SK-N-SH (cell line): ENCODE measurements at regions of chr12 and their contacts with region 1.

Region 1: GRCh38 chr12:53098982-53099651 is 1.6 kb downstream of the IGFBP6 start:
- DNase-seq: peak; percentile 90
- H3K4me3 ChIP-seq: peak overlapping the region; percentile 62 to 78; a peak in 3 of 4 replicates
- H3K27ac ChIP-seq: peak overlapping the region; percentile 90 to 98
- H3K4me1 ChIP-seq: peaks cover 10 to 21% of the 10 kb centered on the region in 2 experiments; a peak in 2 of 4 replicates
- H3K27me3 ChIP-seq: no peaks in the 10 kb centered on the region
- CTCF ChIP-seq: peak; percentile 90
- EP300 ChIP-seq: peak; percentile 30 to 66; a peak in 2 of 4 replicates
- RAD21 ChIP-seq: peak; percentile 86

Region 2: GRCh38 chr12:52442600-52443061 is 656.5 kb before region 1 on chr12:
- CTCF ChIA-PET with region 1: no interaction called
- POLR2A ChIA-PET with region 1: no interaction called
- DNase-seq: no peak
- H3K4me3 ChIP-seq: no peak overlapping the region
- H3K27ac ChIP-seq: peak overlapping the region in 1 of 2 experiments; percentile 72; a peak in 2 of 4 replicates
- H3K4me1 ChIP-seq: peaks cover 0 to 13% of the 10 kb centered on the region in 2 experiments; a peak in 2 of 4 replicates
- H3K27me3 ChIP-seq: peaks cover 17% of the 10 kb centered on the region; the same call in 1 of the 2 replicates
- CTCF ChIP-seq: peak; percentile 21
- EP300 ChIP-seq: no peak
- RAD21 ChIP-seq: no peak

Region 3: DNA sequence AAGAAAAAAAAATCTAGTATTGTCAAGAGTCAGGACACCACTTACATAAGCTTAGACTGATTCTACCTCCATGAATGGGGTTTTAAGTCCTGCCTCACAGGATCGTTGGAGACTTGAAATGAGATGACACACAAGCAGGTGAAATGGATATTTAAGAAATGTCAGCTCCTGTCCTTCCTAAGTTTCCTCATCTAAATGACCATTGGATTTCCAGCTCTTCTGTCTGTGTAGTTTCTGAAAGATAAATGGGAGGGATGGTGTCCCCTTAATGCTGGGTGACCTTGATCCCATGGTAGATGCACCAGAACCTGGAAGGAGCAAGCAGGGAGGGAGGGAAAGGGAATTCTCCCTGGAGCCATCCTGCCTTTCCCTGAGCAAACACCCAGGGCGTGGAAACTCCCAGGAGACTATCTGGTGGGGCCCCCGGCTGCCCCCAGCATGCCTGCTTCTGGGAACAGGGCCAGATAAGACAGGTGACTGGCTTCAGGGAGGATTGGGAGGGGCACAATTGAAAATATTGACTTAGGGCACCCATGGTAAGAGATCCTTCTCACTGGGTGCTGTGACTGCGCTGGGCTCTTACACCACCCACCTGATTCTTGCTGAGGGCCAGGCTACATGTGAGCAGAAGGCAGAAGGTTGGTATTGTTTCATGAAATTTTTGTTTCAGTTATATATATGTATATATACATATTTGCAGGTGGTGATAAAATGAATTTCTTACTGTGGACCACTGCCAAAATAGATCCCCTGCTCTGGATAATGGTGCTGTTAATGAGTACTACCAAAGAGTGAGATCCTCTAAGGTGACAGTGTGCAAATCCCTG is 203.8 kb before region 1 on chr12:
- CTCF ChIA-PET with region 1: no interaction called
- POLR2A ChIA-PET with region 1: no interaction called
- DNase-seq: no peak
- H3K4me3 ChIP-seq: no peak overlapping the region
- H3K27ac ChIP-seq: no peak overlapping the region
- H3K4me1 ChIP-seq: peaks cover 0 to 5% of the 10 kb centered on the region in 2 experiments; a peak in 1 of 4 replicates
- H3K27me3 ChIP-seq: no peaks in the 10 kb centered on the region
- CTCF ChIP-seq: no peak
- EP300 ChIP-seq: no peak
- RAD21 ChIP-seq: no peak

Region 4: GRCh38 chr12:52992699-52993557 is 106.2 kb before region 1 on chr12:
- CTCF ChIA-PET with region 1: no interaction called
- POLR2A ChIA-PET with region 1: no interaction called
- DNase-seq: no peak
- H3K4me3 ChIP-seq: no peak overlapping the region
- H3K27ac ChIP-seq: no peak overlapping the region
- H3K4me1 ChIP-seq: no peaks in the 10 kb centered on the region
- H3K27me3 ChIP-seq: no peaks in the 10 kb centered on the region
- CTCF ChIP-seq: no peak
- EP300 ChIP-seq: no peak
- RAD21 ChIP-seq: no peak

Region 5: GRCh38 chr12:53047221-53048042 is 51.7 kb before region 1 on chr12:
- CTCF ChIA-PET with region 1: interaction called, 27 read pairs
- POLR2A ChIA-PET with region 1: no interaction called
- DNase-seq: peak; percentile 95
- H3K4me3 ChIP-seq: peak overlapping the region; percentile 73 to 75
- H3K27ac ChIP-seq: peak overlapping the region; percentile 95 to 98
- H3K4me1 ChIP-seq: peaks cover 29 to 63% of the 10 kb centered on the region in 2 experiments
- H3K27me3 ChIP-seq: no peaks in the 10 kb centered on the region
- CTCF ChIP-seq: no peak
- EP300 ChIP-seq: peak in 1 of 2 experiments; percentile 53; a peak in 1 of 4 replicates
- RAD21 ChIP-seq: no peak

Region 6: GRCh38 chr12:53054112-53054833 is 44.8 kb before region 1 on chr12:
- CTCF ChIA-PET with region 1: interaction called, 385 read pairs
- POLR2A ChIA-PET with region 1: interaction called, 3 read pairs
- DNase-seq: peak; percentile 97
- H3K4me3 ChIP-seq: peak overlapping the region; percentile 66
- H3K27ac ChIP-seq: peak overlapping the region; percentile 35 to 78; a peak in 3 of 4 replicates
- H3K4me1 ChIP-seq: peaks cover 25 to 46% of the 10 kb centered on the region in 2 experiments
- H3K27me3 ChIP-seq: no peaks in the 10 kb centered on the region
- CTCF ChIP-seq: no peak
- EP300 ChIP-seq: no peak
- RAD21 ChIP-seq: no peak

Region 7: DNA sequence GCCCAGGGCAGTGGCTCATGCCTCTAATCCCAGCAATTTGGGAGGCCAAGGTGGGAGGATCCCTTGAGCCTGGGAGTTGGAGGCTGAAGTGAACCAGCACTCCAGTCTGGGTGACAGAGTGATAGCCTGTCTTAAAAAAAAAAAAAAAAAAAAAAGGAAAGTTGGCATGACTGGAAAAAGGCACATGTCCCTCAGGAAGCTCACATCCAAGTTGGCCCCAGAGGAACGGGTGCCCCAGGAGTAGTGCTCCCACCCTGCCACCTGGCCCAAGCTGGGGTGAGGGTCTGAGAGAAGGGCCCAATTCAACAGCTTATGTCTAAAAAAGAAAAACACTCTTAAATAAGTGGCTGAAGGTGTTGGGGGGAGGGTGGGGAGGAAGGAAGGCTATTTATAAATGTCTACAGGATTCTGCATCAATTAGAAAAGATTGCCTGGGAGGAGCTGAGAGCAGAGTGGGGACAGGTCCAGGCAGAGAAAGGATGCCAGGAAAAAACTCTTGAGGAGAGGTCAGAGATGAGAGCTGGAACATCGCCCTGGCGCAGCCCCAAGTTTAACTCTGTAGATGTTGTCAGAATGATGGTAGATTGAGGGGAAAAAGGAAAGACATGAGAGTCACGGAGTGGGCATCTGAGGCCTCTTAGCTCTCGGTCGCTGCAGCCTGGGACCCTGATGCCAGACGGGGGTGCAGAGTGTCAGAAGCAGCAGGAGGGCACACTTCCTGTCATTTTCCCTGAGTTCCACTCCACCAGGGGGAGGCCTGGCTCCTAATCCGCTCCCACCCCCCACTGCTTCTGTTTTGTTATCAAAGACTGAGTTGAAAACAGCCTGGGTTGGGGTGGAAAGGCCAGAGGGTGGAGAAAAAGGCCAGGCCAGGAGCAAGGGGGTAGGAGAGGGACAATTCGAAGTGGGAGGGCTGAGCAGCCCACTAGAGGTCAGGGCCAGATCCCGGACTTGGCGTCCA is 27.2 kb before region 1 on chr12:
- CTCF ChIA-PET with region 1: interaction called, 385 read pairs
- POLR2A ChIA-PET with region 1: interaction called, 3 read pairs
- DNase-seq: peak; percentile 82
- H3K4me3 ChIP-seq: no peak overlapping the region
- H3K27ac ChIP-seq: peak overlapping the region; percentile 52 to 90
- H3K4me1 ChIP-seq: peaks cover 26 to 30% of the 10 kb centered on the region in 2 experiments
- H3K27me3 ChIP-seq: no peaks in the 10 kb centered on the region
- CTCF ChIP-seq: peak; percentile 45
- EP300 ChIP-seq: no peak
- RAD21 ChIP-seq: peak; percentile 35

Region 8: GRCh38 chr12:53079226-53080117 is 19.6 kb before region 1 on chr12 and contains the start of gene SPRYD3:
- CTCF ChIA-PET with region 1: interaction called, 49 read pairs
- POLR2A ChIA-PET with region 1: interaction called, 10 read pairs
- DNase-seq: peak; percentile 100
- H3K4me3 ChIP-seq: peak within 1 kb of the TSS; percentile 55 to 72
- H3K27ac ChIP-seq: peak within 1 kb of the TSS; percentile 94 to 96
- H3K4me1 ChIP-seq: peaks cover 7 to 14% of the 10 kb centered on the region in 2 experiments; a peak in 2 of 4 replicates
- H3K27me3 ChIP-seq: no peaks in the 10 kb centered on the region
- CTCF ChIP-seq: no peak
- EP300 ChIP-seq: no peak; a peak in 1 of 4 replicates
- RAD21 ChIP-seq: no peak
- polyA plus RNA-seq, gene SPRYD3: 20.3 and 25.8 TPM in 2 replicates

Region 9: DNA sequence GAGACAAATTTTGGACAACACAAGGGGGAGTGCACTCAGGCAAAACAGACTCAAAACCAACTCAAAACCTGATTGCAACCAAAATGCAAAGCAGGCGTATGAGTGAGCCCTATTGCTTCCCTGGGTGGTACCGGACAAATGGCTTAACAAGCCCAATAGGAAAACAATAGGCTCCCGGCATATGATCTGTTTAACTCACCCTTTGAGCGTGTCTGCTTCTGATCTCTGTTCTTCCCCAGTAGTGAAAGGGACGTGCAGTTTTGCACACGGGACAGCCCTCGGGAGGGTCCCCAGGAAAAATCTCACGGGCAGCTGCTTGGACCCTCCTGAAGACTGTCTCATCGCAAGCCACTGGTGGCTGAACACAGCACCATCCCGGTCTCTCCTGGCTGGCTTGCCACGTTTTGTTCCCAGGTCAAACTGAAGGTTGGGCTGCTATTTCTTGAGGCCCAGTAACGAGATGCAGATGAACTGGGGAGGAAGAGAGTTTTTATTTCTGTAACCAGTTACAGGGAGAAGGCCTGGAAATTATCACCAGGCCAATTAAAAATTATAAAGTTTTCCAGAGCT is 14.1 kb after region 1 on chr12:
- CTCF ChIA-PET with region 1: interaction called, 10 read pairs
- POLR2A ChIA-PET with region 1: interaction called, 3 read pairs
- DNase-seq: no peak
- H3K4me3 ChIP-seq: no peak overlapping the region
- H3K27ac ChIP-seq: no peak overlapping the region
- H3K4me1 ChIP-seq: peaks cover 0 to 4% of the 10 kb centered on the region in 2 experiments; a peak in 1 of 4 replicates
- H3K27me3 ChIP-seq: no peaks in the 10 kb centered on the region
- CTCF ChIP-seq: no peak
- EP300 ChIP-seq: no peak
- RAD21 ChIP-seq: no peak

Region 10: DNA sequence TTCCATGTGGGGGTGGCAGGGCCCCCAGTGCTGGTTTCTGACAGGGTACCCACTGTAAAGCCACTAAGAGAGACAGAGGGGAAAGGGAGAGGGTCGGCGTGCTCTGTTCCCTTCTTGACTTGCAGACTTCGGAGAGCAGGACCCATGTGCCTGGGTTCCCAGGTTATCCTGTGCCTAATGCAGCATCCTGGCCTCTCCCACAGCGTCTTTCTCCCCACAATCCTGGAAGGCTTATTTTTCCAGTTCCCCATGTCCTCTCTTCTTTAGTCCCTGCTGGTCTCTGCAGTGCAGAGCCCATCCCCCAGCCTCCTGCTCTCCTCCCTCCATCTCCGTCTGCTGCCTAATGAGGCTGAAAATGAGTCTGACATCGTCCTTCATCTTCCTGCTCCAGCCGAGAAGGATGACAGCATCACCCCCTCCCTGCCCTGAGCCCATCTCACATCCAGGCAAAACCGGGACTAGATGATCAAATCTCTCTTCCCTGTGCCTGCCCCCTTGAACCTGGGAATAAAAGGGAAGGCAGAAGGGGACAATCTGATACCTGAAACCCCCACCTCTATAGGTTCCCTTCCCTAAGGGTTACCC is 613.0 kb after region 1 on chr12:
- CTCF ChIA-PET with region 1: no interaction called
- POLR2A ChIA-PET with region 1: no interaction called
- DNase-seq: no peak
- H3K4me3 ChIP-seq: no peak overlapping the region
- H3K27ac ChIP-seq: no peak overlapping the region
- H3K4me1 ChIP-seq: no peaks in the 10 kb centered on the region
- H3K27me3 ChIP-seq: peaks cover 16% of the 10 kb centered on the region
- CTCF ChIP-seq: no peak
- EP300 ChIP-seq: no peak
- RAD21 ChIP-seq: no peak